Activated naive CD4-positive, alpha-beta T cell treated with anti-CD3 and anti-CD28 coated beads, Interleukin-2, amount 10 ng/mL, durations not matched to agents 7 days and 5 days (primary cell): ENCODE measurements at regions of chr13 and their contacts with region 1.

Region 1: GRCh38 chr13:48400850-48401291 is 12.0 kb downstream of the LPAR6 start:
- DNase-seq: no peak
- H3K4me3 Mint-ChIP-seq: peak overlapping the region; percentile 37
- H3K27ac Mint-ChIP-seq: peak overlapping the region; percentile 80
- H3K4me1 Mint-ChIP-seq: peaks cover 75% of the 10 kb centered on the region
- H3K27me3 Mint-ChIP-seq: no peaks in the 10 kb centered on the region

Region 2: DNA sequence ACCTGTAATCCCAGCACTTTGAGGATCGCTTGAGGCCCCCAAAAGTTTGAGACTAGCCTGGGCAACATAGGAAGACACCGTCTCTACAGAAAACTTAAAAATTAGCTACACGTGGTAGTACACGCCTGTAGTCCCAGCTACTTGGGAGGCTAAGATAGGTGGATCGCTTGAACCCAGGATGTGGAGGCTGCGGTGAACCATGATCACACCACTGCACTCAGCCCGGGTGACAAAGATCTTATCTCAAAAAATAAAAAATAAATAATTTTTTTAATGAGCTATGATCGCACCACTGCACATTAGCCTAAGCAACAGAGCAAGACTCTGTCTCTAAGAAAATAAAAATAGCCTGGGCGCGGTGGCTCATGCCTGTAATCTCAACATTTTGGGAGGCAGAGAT is 125.4 kb after region 1 on chr13:
- CTCF ChIA-PET with region 1: no interaction called
- DNase-seq: no peak
- H3K4me3 Mint-ChIP-seq: no peak overlapping the region
- H3K27ac Mint-ChIP-seq: no peak overlapping the region
- H3K4me1 Mint-ChIP-seq: peaks cover 24% of the 10 kb centered on the region
- H3K27me3 Mint-ChIP-seq: no peaks in the 10 kb centered on the region

Region 3: DNA sequence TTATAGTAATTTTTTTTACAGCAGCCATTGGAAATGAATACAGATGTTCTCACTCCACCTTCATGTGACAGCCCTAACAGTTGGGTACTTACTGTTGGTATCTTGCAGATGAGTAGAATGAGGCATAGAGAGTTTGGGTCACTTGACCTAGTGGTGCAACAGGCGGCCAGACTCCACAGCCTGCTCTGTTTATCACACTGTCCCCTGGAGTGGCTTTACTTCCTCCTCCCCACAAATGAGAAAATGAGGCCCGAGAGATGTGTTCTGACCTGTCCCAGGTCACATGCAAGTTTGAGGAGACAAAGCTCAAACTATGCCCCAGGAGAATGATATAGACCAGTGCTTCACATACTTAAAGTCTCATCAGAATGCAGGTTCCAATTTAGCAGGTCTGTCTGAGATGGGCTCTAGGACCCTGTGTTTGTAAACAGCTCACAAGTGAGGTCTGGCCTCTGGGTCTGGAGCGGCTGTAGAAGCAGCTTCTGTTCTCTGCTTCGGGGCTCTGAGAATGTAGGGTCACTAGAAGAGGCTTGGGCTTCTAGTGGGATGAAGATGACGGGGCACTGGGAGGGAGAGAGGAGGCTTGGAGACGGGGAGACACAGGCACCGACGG is 169.5 kb after region 1 on chr13:
- CTCF ChIA-PET with region 1: interaction called, 10 read pairs
- DNase-seq: no peak
- H3K4me3 Mint-ChIP-seq: no peak overlapping the region
- H3K27ac Mint-ChIP-seq: no peak overlapping the region
- H3K4me1 Mint-ChIP-seq: peaks cover 60% of the 10 kb centered on the region
- H3K27me3 Mint-ChIP-seq: peaks cover 14% of the 10 kb centered on the region

Region 4: GRCh38 chr13:48636550-48636949 is 235.7 kb after region 1 on chr13:
- CTCF ChIA-PET with region 1: no interaction called
- DNase-seq: no peak
- H3K4me3 Mint-ChIP-seq: no peak overlapping the region
- H3K27ac Mint-ChIP-seq: no peak overlapping the region
- H3K4me1 Mint-ChIP-seq: peaks cover 13% of the 10 kb centered on the region
- H3K27me3 Mint-ChIP-seq: peaks cover 9% of the 10 kb centered on the region

Region 5: GRCh38 chr13:48731957-48732569 is 331.2 kb after region 1 on chr13:
- CTCF ChIA-PET with region 1: no interaction called
- DNase-seq: peak; percentile 70
- H3K4me3 Mint-ChIP-seq: peak overlapping the region; percentile 61
- H3K27ac Mint-ChIP-seq: no peak overlapping the region
- H3K4me1 Mint-ChIP-seq: peaks cover 7% of the 10 kb centered on the region
- H3K27me3 Mint-ChIP-seq: peaks cover 10% of the 10 kb centered on the region